Right ventricle myocardium inferior (tissue), 1 donor: ENCODE measurements at regions of chr5 and their contacts with region 1.

Region 1: DNA sequence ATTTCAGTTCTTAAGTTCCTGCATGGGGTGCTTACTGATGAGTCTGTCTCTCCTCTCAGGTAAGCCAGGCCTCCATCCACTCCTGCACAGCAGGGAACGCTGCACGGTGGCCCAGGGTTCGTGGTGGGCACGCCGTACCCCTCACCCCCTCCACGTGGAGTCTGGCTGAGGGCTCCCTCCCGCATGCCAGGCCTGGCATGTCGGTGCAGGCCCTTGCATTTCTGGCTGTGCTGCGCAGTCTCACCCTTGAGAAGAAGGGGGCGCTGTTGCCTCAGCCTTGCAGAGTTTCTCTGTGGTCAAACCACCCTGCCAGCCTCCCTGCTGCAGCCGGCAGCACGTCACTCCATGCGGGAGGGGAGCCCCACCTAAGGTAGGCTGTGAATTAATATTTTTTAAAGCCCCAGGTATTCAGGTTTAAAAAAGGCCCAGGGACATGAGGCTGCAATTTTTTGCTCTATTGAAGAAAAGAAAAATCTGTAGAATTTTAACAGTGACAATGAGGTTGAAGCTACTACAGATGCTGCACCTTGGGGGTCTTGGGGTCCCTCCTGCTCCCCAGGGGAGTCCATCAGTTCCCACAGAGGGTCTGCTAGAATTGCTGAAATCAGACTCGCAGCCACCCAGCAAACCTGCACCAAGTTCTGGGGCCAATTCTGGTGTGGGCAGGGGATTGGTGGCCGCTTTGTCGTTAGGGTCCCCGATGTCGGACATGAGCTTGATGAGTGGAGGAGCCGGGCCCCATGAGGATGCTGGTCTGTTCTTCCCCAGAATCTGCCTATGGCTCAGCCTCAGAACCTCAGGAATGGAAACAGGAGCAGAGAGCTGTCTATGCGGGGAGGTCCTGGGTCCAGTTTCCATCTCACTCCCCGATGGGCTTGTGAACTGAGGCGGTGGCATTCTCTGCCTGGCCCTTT is 52.6 kb downstream of the TENT4A start:
- DNase-seq: peak; percentile 86
- ATAC-seq: peak; percentile 76

Region 2: GRCh38 chr5:6837519-6838110 is 71.7 kb after region 1 on chr5:
- intact Hi-C with region 1: loop called (anchors 5 kb)
- DNase-seq: no peak
- ATAC-seq: no peak

Region 3: DNA sequence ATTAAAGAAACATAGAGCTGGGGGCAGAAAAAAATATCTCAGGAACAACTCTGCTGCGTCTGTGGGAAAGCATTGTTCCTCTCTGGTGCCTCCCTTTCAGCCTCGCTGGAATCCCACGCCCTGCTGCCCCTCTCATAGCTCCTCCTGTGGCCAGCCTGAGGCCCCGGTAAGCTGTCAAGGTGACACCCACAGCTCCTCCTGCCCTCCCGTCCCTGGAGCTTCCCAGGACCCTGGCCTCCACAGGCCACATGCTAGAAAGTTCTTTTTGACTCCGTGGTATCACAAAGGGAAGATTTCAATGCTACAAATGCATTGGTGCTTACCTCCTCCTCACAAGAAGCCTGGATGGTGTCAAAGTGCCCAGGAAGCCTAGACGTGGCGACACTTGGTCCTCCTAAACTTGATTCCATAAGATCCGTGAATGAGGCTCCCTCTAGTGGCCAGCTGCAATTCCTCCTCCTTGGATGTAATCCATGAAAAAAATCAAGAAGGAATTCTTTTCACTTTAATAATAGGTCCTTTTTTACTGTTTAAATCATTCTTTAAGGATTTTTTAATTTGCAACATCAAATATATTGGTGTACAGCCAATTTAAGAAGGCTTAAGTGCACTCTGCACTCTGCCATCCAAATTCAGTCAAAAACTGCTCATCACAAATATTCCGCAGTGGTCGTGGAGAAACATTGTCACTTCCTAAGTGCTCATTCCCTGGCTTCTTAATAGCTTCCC is 980.2 kb after region 1 on chr5:
- intact Hi-C with region 1: loop called (anchors 5 kb)
- DNase-seq: peak; percentile 61
- ATAC-seq: no peak